ENCODE measurements at regions of chr10 and their contacts with region 1.

Region 1: DNA sequence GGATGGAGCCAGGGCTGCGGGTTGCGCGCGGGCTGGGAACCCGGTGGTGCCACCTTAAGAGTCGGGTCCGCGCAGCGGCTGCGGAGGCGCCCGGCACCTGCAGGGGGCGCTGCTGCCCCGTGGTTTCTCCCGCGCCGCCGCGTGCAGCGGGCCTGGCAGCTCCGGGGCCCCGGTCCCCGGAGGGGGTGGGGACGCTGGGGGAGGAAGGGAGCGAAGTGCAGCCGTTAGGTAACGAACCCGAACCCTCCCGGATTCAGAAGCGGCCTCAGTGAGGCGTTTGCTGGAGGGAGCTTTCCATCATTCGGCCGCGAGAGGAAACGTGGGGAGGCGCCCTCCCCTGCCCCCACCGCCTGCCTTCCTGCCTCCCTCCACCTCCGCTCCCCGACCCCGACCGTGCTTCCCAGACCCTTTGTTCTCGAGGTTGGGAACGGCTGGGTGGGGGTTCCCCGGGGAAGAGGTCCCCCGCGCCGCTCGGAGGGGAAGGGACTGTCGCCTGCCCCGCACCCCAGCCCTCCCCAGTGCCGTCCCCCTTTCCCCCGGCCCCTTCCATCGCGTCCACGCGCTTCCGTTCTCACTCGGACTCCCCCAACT is 29.6 kb downstream of the SKIDA1 start:
- DNase-seq: peak; percentile 77 to 94 (median 85)
- ATAC-seq: peak; percentile 85
- H3K4me3 ChIP-seq: peak overlapping the region; percentile 73 to 79
- H3K4me3 Mint-ChIP-seq: peak overlapping the region; percentile 81
- H3K27ac ChIP-seq: no peak overlapping the region
- H3K27ac Mint-ChIP-seq: no peak overlapping the region
- H3K4me1 ChIP-seq: peaks cover 35% of the 10 kb centered on the region
- H3K4me1 Mint-ChIP-seq: peaks cover 19% of the 10 kb centered on the region
- H3K27me3 ChIP-seq: peaks cover 53 to 58% of the 10 kb centered on the region in 2 experiments
- H3K27me3 Mint-ChIP-seq: peaks cover 60% of the 10 kb centered on the region
- CTCF ChIP-seq: peak; percentile 98

Region 2: GRCh38 chr10:21509341-21510240 is 13.7 kb after region 1 on chr10:
- CTCF ChIA-PET with region 1: interaction called, 23 read pairs
- POLR2A ChIA-PET with region 1: interaction called, 6 read pairs
- intact Hi-C with region 1: no loop called
- DNase-seq: no peak
- ATAC-seq: no peak
- H3K4me3 ChIP-seq: no peak overlapping the region
- H3K4me3 Mint-ChIP-seq: no peak overlapping the region
- H3K27ac ChIP-seq: no peak overlapping the region
- H3K27ac Mint-ChIP-seq: no peak overlapping the region
- H3K4me1 ChIP-seq: no peaks in the 10 kb centered on the region
- H3K4me1 Mint-ChIP-seq: no peaks in the 10 kb centered on the region
- H3K27me3 ChIP-seq: peaks cover 22 to 23% of the 10 kb centered on the region in 2 experiments
- H3K27me3 Mint-ChIP-seq: peaks cover 51% of the 10 kb centered on the region
- CTCF ChIP-seq: no peak

Region 3: GRCh38 chr10:21533467-21534279 is 37.8 kb after region 1 on chr10 and contains the start of gene MLLT10:
- CTCF ChIA-PET with region 1: interaction called, 5 read pairs
- POLR2A ChIA-PET with region 1: interaction called, 6 read pairs
- intact Hi-C with region 1: loop called (anchors 1 kb)
- DNase-seq: peak; percentile 83 to 98 (median 92)
- ATAC-seq: peak; percentile 84
- H3K4me3 ChIP-seq: peak within 1 kb of the TSS; percentile 69 to 81
- H3K4me3 Mint-ChIP-seq: peak within 1 kb of the TSS; percentile 96
- H3K27ac ChIP-seq: peak within 1 kb of the TSS; percentile 64 to 75
- H3K27ac Mint-ChIP-seq: peak within 1 kb of the TSS; percentile 94
- H3K4me1 ChIP-seq: peaks cover 16% of the 10 kb centered on the region
- H3K4me1 Mint-ChIP-seq: peaks cover 29% of the 10 kb centered on the region
- H3K27me3 ChIP-seq: no peaks in the 10 kb centered on the region
- H3K27me3 Mint-ChIP-seq: no peaks in the 10 kb centered on the region
- CTCF ChIP-seq: peak; percentile 22
- total RNA-seq, gene MLLT10: 36.7 to 41.0 TPM

Region 4: DNA sequence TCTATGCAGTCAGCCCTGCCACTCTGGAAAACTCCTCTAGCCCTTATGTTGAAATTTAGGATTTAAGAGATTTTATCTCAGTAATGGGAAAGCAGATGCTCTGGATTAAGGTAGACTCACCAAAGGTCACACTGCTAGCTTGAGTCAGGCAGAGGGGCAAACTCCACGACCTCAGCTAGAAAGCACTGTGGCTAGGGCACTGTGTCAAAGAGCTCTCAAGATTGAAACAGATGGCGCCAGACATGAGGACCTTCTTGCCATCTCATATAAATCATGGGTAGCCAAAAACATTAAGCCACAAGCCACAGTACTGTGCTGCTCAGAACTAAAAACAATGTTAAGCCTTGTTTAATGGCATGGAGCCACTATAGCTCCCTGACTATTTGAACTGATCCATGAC is 319.0 kb after region 1 on chr10:
- CTCF ChIA-PET with region 1: no interaction called
- POLR2A ChIA-PET with region 1: no interaction called
- intact Hi-C with region 1: loop called in 1 of 2 experiments (anchors 5 kb)
- DNase-seq: no peak
- ATAC-seq: no peak
- H3K4me3 ChIP-seq: no peak overlapping the region
- H3K4me3 Mint-ChIP-seq: no peak overlapping the region
- H3K27ac ChIP-seq: no peak overlapping the region
- H3K27ac Mint-ChIP-seq: no peak overlapping the region
- H3K4me1 ChIP-seq: no peaks in the 10 kb centered on the region
- H3K4me1 Mint-ChIP-seq: no peaks in the 10 kb centered on the region
- H3K27me3 ChIP-seq: no peaks in the 10 kb centered on the region
- H3K27me3 Mint-ChIP-seq: no peaks in the 10 kb centered on the region
- CTCF ChIP-seq: no peak

Region 5: GRCh38 chr10:22003079-22003913 is 507.4 kb after region 1 on chr10 and contains the start of gene DNAJC1:
- CTCF ChIA-PET with region 1: interaction called, 4 read pairs
- POLR2A ChIA-PET with region 1: no interaction called
- intact Hi-C with region 1: loop called (anchors 5 kb)
- DNase-seq: peak; percentile 96 to 99 (median 98)
- ATAC-seq: peak; percentile 90
- H3K4me3 ChIP-seq: peak within 1 kb of the TSS; percentile 71 to 95
- H3K4me3 Mint-ChIP-seq: peak within 1 kb of the TSS; percentile 95
- H3K27ac ChIP-seq: peak within 1 kb of the TSS; percentile 80 to 85
- H3K27ac Mint-ChIP-seq: peak within 1 kb of the TSS; percentile 94
- H3K4me1 ChIP-seq: peaks cover 16% of the 10 kb centered on the region
- H3K4me1 Mint-ChIP-seq: peaks cover 48% of the 10 kb centered on the region
- H3K27me3 ChIP-seq: no peaks in the 10 kb centered on the region
- H3K27me3 Mint-ChIP-seq: peaks cover 2% of the 10 kb centered on the region
- CTCF ChIP-seq: no peak
- total RNA-seq, gene DNAJC1: 15.3 to 18.1 TPM

Region 6: GRCh38 chr10:22420787-22421517 is 925.1 kb after region 1 on chr10:
- CTCF ChIA-PET with region 1: no interaction called
- POLR2A ChIA-PET with region 1: no interaction called
- intact Hi-C with region 1: loop called in 1 of 2 experiments (anchors 5 kb)
- DNase-seq: peak in 3 of 9 experiments; percentile 8 to 56 (median 33)
- ATAC-seq: peak; percentile 49
- H3K4me3 ChIP-seq: no peak overlapping the region
- H3K4me3 Mint-ChIP-seq: no peak overlapping the region
- H3K27ac ChIP-seq: no peak overlapping the region
- H3K27ac Mint-ChIP-seq: no peak overlapping the region
- H3K4me1 ChIP-seq: no peaks in the 10 kb centered on the region
- H3K4me1 Mint-ChIP-seq: no peaks in the 10 kb centered on the region
- H3K27me3 ChIP-seq: no peaks in the 10 kb centered on the region
- H3K27me3 Mint-ChIP-seq: peaks cover 5% of the 10 kb centered on the region
- CTCF ChIP-seq: peak; percentile 37

Region 7: GRCh38 chr10:23067939-23068775 is 1572.3 kb after region 1 on chr10:
- CTCF ChIA-PET with region 1: no interaction called
- POLR2A ChIA-PET with region 1: no interaction called
- intact Hi-C with region 1: loop called in 1 of 2 experiments (anchors 5 kb)
- DNase-seq: peak; percentile 14 to 76 (median 68)
- ATAC-seq: peak; percentile 48
- H3K4me3 ChIP-seq: no peak overlapping the region
- H3K4me3 Mint-ChIP-seq: no peak overlapping the region
- H3K27ac ChIP-seq: no peak overlapping the region
- H3K27ac Mint-ChIP-seq: no peak overlapping the region
- H3K4me1 ChIP-seq: no peaks in the 10 kb centered on the region
- H3K4me1 Mint-ChIP-seq: peaks cover 1% of the 10 kb centered on the region
- H3K27me3 ChIP-seq: no peaks in the 10 kb centered on the region
- H3K27me3 Mint-ChIP-seq: peaks cover 17% of the 10 kb centered on the region
- CTCF ChIP-seq: peak; percentile 77

Measured in CD8-positive, alpha-beta T cell (primary cell).